Left lung (tissue), 14 donors: ENCODE measurements at regions of chr9 and their contacts with region 1.

Region 1: GRCh38 chr9:34899535-34900158 is 58.4 kb upstream of the PHF24 start:
- DNase-seq: peak; percentile 61 to 83 (median 74)
- ATAC-seq: peak; percentile 100
- H3K4me3 ChIP-seq: no peak overlapping the region
- H3K27ac ChIP-seq: no peak overlapping the region
- H3K4me1 ChIP-seq: no peaks in the 10 kb centered on the region
- H3K27me3 ChIP-seq: peaks cover 0 to 40% of the 10 kb centered on the region in 2 donors
- CTCF ChIP-seq: peak; percentile 75 to 95

Region 2: GRCh38 chr9:34809504-34810186 is 90.0 kb before region 1 on chr9:
- intact Hi-C with region 1: no loop called
- DNase-seq: peak in 1 of 4 donors; percentile 10
- ATAC-seq: peak; percentile 75
- H3K4me3 ChIP-seq: no peak overlapping the region
- H3K27ac ChIP-seq: no peak overlapping the region
- H3K4me1 ChIP-seq: peaks cover 0 to 5% of the 10 kb centered on the region in 2 donors
- H3K27me3 ChIP-seq: peaks cover 20 to 45% of the 10 kb centered on the region in 2 donors
- CTCF ChIP-seq: peak in 1 of 2 donors; percentile 16

Region 3: GRCh38 chr9:34989003-34989945 is 89.6 kb after region 1 on chr9 and contains the start of gene DNAJB5:
- intact Hi-C with region 1: loop called in 1 of 2 experiments (anchors 10 kb)
- DNase-seq: peak; percentile 95 to 99 (median 99)
- ATAC-seq: peak; percentile 93
- H3K4me3 ChIP-seq: peak within 1 kb of the TSS; percentile 62 to 70
- H3K27ac ChIP-seq: peak within 1 kb of the TSS; percentile 78 to 85
- H3K4me1 ChIP-seq: peaks cover 10 to 48% of the 10 kb centered on the region in 2 donors
- H3K27me3 ChIP-seq: peaks cover 0 to 8% of the 10 kb centered on the region in 2 donors
- CTCF ChIP-seq: peak in 1 of 2 donors; percentile 13
- polyA plus RNA-seq, gene DNAJB5: 6.9 to 13.3 (median 8.5) TPM

Region 4: GRCh38 chr9:35051069-35051967 is 151.7 kb after region 1 on chr9:
- intact Hi-C with region 1: no loop called
- DNase-seq: no peak
- ATAC-seq: peak; percentile 83
- H3K4me3 ChIP-seq: no peak overlapping the region
- H3K27ac ChIP-seq: no peak overlapping the region
- H3K4me1 ChIP-seq: no peaks in the 10 kb centered on the region
- H3K27me3 ChIP-seq: no peaks in the 10 kb centered on the region
- CTCF ChIP-seq: peak; percentile 37 to 55

Region 5: GRCh38 chr9:35096035-35096849 is 196.6 kb after region 1 on chr9 and contains the start of gene PIGO:
- intact Hi-C with region 1: loop called in 1 of 2 experiments (anchors 10 kb)
- DNase-seq: peak; percentile 77 to 98 (median 92)
- ATAC-seq: peak; percentile 98
- H3K4me3 ChIP-seq: peak within 1 kb of the TSS; percentile 69 to 79
- H3K27ac ChIP-seq: peak within 1 kb of the TSS; percentile 95 to 96
- H3K4me1 ChIP-seq: peaks cover 8 to 20% of the 10 kb centered on the region in 2 donors
- H3K27me3 ChIP-seq: no peaks in the 10 kb centered on the region
- CTCF ChIP-seq: peak; percentile 68 to 83
- polyA plus RNA-seq, gene PIGO: 22.9 to 25.8 (median 24.8) TPM

Region 6: DNA sequence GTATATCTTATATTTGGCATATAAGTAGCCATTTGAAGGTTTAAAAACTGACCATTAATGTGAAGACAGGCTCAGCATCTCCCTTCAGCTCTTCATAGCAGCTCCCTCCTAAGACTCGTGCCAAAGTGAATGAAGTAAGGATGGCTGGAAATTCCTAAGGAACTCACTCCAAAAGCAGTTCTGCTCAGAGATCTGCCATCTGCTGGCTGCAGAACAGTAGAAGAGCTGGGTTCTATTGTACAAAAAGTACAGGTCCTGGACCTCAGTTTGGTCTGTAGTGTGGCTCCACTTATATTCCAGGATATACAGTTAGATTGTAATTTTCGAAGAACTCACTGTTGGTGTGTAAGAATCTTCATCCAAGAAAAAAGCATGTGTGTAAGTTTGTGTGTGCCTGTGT is 485.4 kb after region 1 on chr9:
- intact Hi-C with region 1: loop called in 1 of 2 experiments (anchors 10 kb)
- DNase-seq: peak in 1 of 4 donors; percentile 16
- ATAC-seq: no peak
- H3K4me3 ChIP-seq: no peak overlapping the region
- H3K27ac ChIP-seq: no peak overlapping the region
- H3K4me1 ChIP-seq: no peaks in the 10 kb centered on the region
- H3K27me3 ChIP-seq: no peaks in the 10 kb centered on the region
- CTCF ChIP-seq: no peak